ENCODE measurements at regions of chr9 and their contacts with region 1.

Region 1: GRCh38 chr9:117656002-117656401 is 48.2 kb upstream of the TLR4 start:
- DNase-seq: no peak
- ATAC-seq: no peak
- H3K4me3 ChIP-seq: no peak overlapping the region
- H3K27ac ChIP-seq: no peak overlapping the region
- H3K4me1 ChIP-seq: no peaks in the 10 kb centered on the region
- H3K27me3 ChIP-seq: peaks cover 0 to 9% (median 0%) of the 10 kb centered on the region in 9 donors
- CTCF ChIP-seq: no peak
- POLR2A ChIP-seq: no peak

Region 2: GRCh38 chr9:117744856-117745389 is 88.9 kb after region 1 on chr9:
- intact Hi-C with region 1: no loop called
- DNase-seq: peak in 4 of 5 donors; percentile 9 to 54 (median 28)
- ATAC-seq: peak; percentile 9 to 65 (median 54)
- H3K4me3 ChIP-seq: peak overlapping the region; percentile 19 to 64 (median 50)
- H3K27ac ChIP-seq: peak overlapping the region in 3 of 12 donors; percentile 6 to 21 (median 10)
- H3K4me1 ChIP-seq: peaks cover 0 to 15% (median 5%) of the 10 kb centered on the region in 12 donors
- H3K27me3 ChIP-seq: peaks cover 0 to 28% (median 0%) of the 10 kb centered on the region in 9 donors
- CTCF ChIP-seq: no peak
- POLR2A ChIP-seq: no peak

Region 3: DNA sequence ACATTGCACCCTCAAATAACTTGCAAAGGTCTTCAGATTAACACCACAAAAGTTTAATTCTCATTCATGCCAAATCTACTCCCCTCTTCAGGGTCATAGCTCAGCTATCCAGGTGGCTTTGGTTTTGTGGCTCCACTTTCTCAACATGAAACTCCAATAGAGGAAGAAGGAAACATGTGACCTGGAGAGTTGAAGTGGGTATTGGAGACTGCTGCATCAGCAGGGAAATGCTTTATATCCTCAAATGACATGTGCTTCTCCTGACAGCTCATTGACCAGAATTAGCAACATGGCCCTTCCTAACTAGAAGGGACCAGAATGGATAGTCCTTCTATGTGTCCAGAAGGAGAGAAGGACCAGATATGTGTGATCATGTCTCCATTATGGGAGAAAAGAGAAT is 121.8 kb after region 1 on chr9:
- intact Hi-C with region 1: loop called in 1 of 10 experiments (anchors 10 kb)
- DNase-seq: peak in 1 of 5 donors; percentile 20
- ATAC-seq: peak in 3 of 4 donors; percentile 41 to 79 (median 70)
- H3K4me3 ChIP-seq: no peak overlapping the region
- H3K27ac ChIP-seq: peak overlapping the region in 1 of 12 donors; percentile 9
- H3K4me1 ChIP-seq: peaks cover 0 to 58% (median 10%) of the 10 kb centered on the region in 12 donors
- H3K27me3 ChIP-seq: no peaks in the 10 kb centered on the region
- CTCF ChIP-seq: no peak
- POLR2A ChIP-seq: no peak